Activated CD4-positive, alpha-beta T cell treated with anti-CD3 and anti-CD28 coated beads, Interleukin-2, amount 10 ng/mL, durations not matched to agents 7 days and 5 days (primary cell): ENCODE measurements at regions of chr17 and their contacts with region 1.

Region 1: GRCh38 chr17:28726226-28727130 is at the start of gene TLCD1:
- DNase-seq: peak; percentile 93
- H3K4me3 Mint-ChIP-seq: peak within 1 kb of the TSS; percentile 90
- H3K27ac Mint-ChIP-seq: peak within 1 kb of the TSS; percentile 99
- H3K4me1 Mint-ChIP-seq: peaks cover 67% of the 10 kb centered on the region
- H3K27me3 Mint-ChIP-seq: no peaks in the 10 kb centered on the region
- total RNA-seq, gene TLCD1: 2.1 to 2.3 TPM

Region 2: DNA sequence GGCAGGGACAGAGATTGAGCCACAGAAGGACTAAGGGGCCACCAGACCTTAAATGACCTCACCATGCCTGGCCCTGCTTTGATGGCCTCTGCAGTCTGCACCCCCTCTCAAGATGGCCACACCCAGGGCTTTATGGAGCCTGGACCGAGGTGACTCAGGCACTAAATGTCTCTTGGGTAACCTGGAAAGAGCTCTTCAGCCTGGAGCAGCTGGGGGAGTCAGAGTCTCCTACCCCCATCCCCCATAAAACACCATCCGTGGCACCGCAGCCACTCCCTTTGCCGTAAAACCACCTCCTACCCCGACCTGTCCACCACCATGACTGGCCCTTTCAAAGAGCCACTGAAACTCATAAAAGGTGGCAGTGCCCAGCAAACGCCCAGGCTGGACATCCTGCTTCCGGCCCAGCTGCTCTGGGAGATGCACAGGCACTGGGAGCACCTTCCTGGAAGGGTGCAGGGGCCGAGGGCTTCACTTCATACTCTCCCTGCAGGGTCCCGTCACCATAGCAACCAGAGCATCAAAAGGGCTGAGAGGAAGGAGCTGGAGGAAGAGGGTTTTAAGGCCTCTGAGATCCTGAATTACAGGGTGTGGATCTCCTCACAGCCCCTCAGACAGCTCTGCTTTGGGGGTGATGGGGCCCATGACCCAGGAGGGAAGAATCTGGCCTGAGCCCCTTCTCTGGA is 198.0 kb before region 1 on chr17:
- CTCF ChIA-PET with region 1: no interaction called
- POLR2A ChIA-PET with region 1: no interaction called
- DNase-seq: no peak
- H3K4me3 Mint-ChIP-seq: no peak overlapping the region
- H3K27ac Mint-ChIP-seq: no peak overlapping the region
- H3K4me1 Mint-ChIP-seq: no peaks in the 10 kb centered on the region
- H3K27me3 Mint-ChIP-seq: peaks cover 1% of the 10 kb centered on the region

Region 3: DNA sequence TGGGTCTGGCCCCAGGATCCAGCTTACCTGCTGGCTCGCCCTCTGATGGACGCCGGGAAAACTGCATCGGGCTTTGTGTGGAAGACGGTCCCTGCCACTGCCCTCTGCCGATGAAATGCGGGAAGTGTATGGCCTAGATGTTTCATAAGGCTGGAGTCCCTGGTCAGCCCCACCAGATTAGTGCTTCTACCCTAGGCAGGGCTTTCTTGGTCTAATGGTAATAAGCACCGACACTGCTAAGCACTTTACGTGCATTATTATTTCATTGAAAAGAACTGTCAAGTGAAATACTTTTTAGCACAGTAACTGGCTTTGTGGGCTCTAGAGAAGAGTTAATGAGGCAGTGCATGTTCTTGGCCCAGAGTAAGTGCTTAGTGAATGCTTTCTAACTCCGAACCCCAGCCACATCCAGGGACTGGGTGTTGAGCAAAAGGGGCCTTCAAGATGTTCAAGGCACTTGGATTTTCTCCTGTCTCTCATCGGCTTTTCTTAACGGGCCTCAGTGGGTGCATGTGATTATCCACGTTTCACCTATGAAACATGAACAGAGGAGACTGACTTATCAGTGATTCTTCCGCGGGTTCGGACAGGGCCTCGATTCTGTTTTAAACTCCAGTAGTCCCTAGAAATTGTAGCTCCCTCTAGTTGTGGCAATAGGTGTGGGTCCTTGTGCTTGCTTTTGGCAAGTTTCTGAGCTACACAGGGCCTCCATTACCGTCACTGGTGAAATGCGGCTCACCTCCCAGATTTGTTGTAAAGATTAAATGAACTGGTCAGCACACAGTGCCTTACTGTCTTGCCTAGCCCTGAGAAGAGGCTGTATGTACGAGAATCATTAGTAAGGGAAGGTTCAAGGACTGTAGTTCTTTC is 23.9 kb after region 1 on chr17:
- CTCF ChIA-PET with region 1: interaction called, 420 read pairs
- POLR2A ChIA-PET with region 1: interaction called, 6 read pairs
- DNase-seq: peak; percentile 91
- H3K4me3 Mint-ChIP-seq: no peak overlapping the region
- H3K27ac Mint-ChIP-seq: peak overlapping the region; percentile 31
- H3K4me1 Mint-ChIP-seq: peaks cover 36% of the 10 kb centered on the region
- H3K27me3 Mint-ChIP-seq: no peaks in the 10 kb centered on the region

Region 4: GRCh38 chr17:28896884-28897768 is 170.6 kb after region 1 on chr17 and contains the start of gene FLOT2:
- CTCF ChIA-PET with region 1: interaction called, 32 read pairs
- POLR2A ChIA-PET with region 1: no interaction called
- DNase-seq: peak; percentile 68
- H3K4me3 Mint-ChIP-seq: peak within 1 kb of the TSS; percentile 98
- H3K27ac Mint-ChIP-seq: peak within 1 kb of the TSS; percentile 97
- H3K4me1 Mint-ChIP-seq: peaks cover 67% of the 10 kb centered on the region
- H3K27me3 Mint-ChIP-seq: no peaks in the 10 kb centered on the region
- total RNA-seq, gene FLOT2: 200 to 212 TPM

Region 5: GRCh38 chr17:28925912-28926365 is 199.5 kb after region 1 on chr17:
- CTCF ChIA-PET with region 1: interaction called, 23 read pairs
- POLR2A ChIA-PET with region 1: no interaction called
- DNase-seq: peak; percentile 70
- H3K4me3 Mint-ChIP-seq: peak overlapping the region; percentile 28
- H3K27ac Mint-ChIP-seq: peak overlapping the region; percentile 92
- H3K4me1 Mint-ChIP-seq: peaks cover 62% of the 10 kb centered on the region
- H3K27me3 Mint-ChIP-seq: no peaks in the 10 kb centered on the region

Region 6: GRCh38 chr17:28967221-28968140 is 241.0 kb after region 1 on chr17:
- CTCF ChIA-PET with region 1: interaction called, 11 read pairs
- POLR2A ChIA-PET with region 1: no interaction called
- DNase-seq: no peak
- H3K4me3 Mint-ChIP-seq: no peak overlapping the region
- H3K27ac Mint-ChIP-seq: peak overlapping the region; percentile 26
- H3K4me1 Mint-ChIP-seq: no peaks in the 10 kb centered on the region
- H3K27me3 Mint-ChIP-seq: peaks cover 9% of the 10 kb centered on the region